ENCODE measurements at regions of chr22 and their contacts with region 1.

Region 1: DNA sequence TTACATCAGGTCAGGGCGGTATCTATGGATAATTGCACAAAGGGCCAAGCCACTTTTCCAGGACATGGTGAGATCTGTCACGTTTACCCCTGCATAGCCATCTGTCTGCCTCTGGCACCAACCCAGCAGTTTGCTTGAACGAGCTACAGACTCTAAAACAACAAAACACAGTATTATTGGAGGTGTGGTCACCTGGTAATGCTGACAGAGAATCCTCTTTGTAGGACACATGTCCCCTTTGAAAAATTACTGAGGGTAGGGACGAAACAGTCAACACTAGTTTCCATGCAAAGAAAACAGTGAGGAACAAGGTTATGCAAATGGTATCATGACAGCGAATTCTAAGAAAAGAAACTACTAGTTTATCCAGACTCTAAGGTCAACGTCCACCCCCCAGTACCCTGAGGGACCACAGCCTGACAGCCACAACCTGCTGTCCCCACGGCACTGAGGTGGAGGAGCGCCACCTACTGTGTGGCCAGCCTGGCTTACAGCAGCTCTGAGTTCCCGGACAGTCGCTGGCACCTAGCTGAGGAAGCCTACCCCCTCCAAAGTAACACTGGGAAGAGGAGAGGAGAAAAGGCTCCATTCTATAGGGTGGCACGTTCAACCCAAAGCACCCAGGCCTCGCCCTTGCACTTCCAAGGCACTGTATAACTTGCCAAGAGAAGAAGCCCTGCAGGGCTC is 117.4 kb upstream of the BID start:
- H3K4me3 ChIP-seq: no peak overlapping the region
- H3K27ac ChIP-seq: no peak overlapping the region
- H3K4me1 ChIP-seq: peaks cover 3% of the 10 kb centered on the region; the same call in 1 of the 2 replicates
- CTCF ChIP-seq: 0 out of 2 replicates have a peak, but pooled peaks have one; percentile 25

Region 2: DNA sequence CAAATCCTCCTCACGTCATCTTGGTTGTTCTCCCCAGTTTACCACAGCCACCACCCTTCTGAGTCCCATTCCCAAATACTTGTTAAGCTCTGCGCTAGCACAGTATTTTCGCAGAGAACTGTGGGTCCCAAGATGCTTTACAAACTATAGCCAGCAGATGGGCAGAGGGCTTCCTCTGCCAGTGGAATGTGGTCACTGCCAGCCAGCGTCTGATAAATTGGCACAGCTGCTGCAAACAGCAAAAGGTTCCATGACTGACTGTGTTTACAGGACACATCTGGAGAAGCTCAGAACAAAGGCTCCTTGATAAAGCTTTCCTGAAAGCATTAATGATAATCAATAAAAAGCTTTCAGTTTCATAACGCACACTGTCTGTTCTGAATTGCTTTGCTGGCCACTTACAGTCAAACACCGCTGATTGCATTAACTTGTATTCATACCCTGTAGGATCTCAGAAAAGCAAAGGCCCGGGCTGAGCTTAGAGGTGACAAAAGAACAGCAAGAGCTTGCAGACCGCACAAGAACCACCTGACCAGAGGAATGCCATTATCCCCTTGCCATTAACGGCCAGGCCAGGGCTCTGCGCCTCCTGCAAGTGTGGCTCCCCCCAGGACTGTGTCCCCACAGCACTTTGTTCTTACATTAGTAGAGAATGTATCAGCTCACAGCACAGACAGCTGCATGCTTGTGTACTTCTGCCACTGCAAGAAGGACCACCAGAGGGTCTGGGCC is 12.1 kb after region 1 on chr22:
- CTCF ChIA-PET with region 1: interaction called, 13 read pairs
- POLR2A ChIA-PET with region 1: no interaction called
- H3K4me3 ChIP-seq: no peak overlapping the region
- H3K27ac ChIP-seq: no peak overlapping the region
- H3K4me1 ChIP-seq: no peaks in the 10 kb centered on the region
- CTCF ChIP-seq: no peak

Region 3: GRCh38 chr22:17914474-17914873 is 22.9 kb after region 1 on chr22:
- CTCF ChIA-PET with region 1: no interaction called
- POLR2A ChIA-PET with region 1: no interaction called
- H3K4me3 ChIP-seq: no peak overlapping the region
- H3K27ac ChIP-seq: no peak overlapping the region
- H3K4me1 ChIP-seq: peaks cover 10% of the 10 kb centered on the region
- CTCF ChIP-seq: no peak

Region 4: DNA sequence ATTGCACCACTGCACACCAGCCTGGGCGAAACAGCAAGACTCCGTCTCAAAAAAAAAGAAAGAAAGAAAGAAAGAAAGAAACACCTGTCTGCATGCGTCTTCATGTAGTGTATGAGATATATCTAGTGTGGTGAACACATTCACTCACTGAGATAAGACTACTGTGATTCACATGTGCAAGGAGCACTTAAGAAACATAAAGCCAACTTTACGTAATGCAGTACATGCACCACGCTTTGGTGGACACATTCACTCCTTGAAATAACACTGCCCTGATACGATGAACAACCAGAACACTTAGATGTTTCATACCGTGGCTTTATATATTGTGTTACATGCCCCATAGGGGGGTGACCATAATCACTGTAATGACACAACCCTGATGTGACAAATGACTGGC is 36.8 kb after region 1 on chr22:
- CTCF ChIA-PET with region 1: no interaction called
- POLR2A ChIA-PET with region 1: no interaction called
- H3K4me3 ChIP-seq: no peak overlapping the region
- H3K27ac ChIP-seq: no peak overlapping the region
- H3K4me1 ChIP-seq: peaks cover 5% of the 10 kb centered on the region
- CTCF ChIP-seq: no peak

Region 5: DNA sequence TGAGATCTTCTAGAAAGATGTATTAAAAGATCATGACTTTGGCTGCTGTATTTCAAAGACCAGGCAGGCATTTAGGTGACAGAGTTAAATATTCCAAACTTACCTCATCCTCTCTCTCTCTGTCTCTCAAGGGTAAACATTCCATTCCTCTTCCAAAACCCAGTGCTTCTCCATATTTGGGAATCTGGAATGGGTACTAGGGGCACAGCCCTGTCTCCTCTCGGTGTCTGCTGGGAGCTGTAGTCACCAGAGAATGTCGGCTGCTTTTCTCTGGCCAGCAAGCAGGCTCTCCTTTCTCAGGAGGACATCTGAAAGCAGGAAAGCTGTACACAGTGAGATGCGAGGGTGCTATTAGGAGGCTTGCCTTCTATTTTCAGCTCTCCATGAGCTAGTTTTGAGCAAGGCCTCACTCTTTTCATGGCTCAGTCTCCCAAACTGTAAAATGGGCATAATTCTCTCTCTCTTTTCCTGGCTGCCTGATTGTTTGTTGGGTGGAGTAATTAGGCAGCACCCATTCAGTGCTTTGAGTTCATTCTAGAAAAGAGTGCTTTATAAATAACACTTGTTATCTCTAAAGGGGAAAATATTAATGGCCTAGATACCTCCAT is 176.9 kb after region 1 on chr22:
- CTCF ChIA-PET with region 1: no interaction called
- POLR2A ChIA-PET with region 1: no interaction called
- H3K4me3 ChIP-seq: no peak overlapping the region
- H3K27ac ChIP-seq: no peak overlapping the region
- H3K4me1 ChIP-seq: no peaks in the 10 kb centered on the region
- CTCF ChIP-seq: no peak

Measured in HEK293 (cell line).